Caco-2 (cell line): ENCODE measurements at regions of chr1 and their contacts with region 1.

Region 1: DNA sequence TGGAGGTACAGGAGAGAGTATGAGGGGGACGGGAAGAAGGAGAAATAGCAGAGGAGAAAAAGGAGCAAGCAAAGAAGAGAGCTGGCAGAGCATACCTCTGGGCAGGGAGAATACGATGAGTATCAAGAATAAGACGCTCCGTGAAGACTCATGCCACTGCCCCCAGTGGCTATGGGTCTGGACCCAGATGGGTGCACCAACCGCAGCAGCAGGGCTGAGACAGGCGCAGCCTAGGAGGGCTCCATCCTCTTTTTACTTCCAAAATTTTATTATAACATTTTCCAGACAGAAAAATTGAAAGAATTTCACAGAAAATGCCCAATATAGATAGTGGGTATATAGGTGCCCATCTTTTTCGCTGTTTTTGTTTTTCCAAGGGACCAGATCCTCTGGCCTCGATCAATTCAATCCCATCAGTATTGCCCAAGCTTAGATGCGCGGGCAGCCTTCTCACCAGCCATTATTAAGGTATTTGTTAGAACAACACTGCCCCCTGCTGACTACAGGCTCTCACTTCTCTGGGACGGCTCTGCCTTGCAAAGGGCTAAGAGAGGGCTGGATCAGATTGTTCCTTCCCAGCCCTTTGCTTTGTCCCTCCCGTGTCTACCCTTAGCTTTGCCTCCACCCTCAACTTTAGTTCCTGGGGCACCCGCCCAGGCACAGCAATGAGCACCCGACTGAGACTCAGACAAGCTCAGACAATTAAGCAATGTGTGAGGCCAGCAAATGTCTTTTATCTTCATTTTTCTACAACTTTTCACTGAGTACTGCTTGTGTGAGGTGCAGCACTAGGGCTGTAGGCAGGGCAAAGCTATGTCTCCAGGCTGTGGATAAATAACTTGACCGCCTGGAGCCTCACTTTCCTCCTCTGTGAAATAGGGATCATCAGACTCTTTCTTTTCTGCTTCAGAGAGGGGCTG is 17.5 kb upstream of the CAMK1G start:
- DNase-seq: peak; percentile 83 to 86
- H3K4me3 ChIP-seq: no peak overlapping the region
- H3K4me3 Mint-ChIP-seq: no peak overlapping the region
- H3K27ac Mint-ChIP-seq: no peak overlapping the region
- H3K4me1 ChIP-seq: no peaks in the 10 kb centered on the region
- H3K4me1 Mint-ChIP-seq: no peaks in the 10 kb centered on the region
- H3K27me3 ChIP-seq: no peaks in the 10 kb centered on the region
- H3K27me3 Mint-ChIP-seq: peaks cover 9% of the 10 kb centered on the region
- CTCF ChIP-seq: peak; percentile 70 to 79

Region 2: DNA sequence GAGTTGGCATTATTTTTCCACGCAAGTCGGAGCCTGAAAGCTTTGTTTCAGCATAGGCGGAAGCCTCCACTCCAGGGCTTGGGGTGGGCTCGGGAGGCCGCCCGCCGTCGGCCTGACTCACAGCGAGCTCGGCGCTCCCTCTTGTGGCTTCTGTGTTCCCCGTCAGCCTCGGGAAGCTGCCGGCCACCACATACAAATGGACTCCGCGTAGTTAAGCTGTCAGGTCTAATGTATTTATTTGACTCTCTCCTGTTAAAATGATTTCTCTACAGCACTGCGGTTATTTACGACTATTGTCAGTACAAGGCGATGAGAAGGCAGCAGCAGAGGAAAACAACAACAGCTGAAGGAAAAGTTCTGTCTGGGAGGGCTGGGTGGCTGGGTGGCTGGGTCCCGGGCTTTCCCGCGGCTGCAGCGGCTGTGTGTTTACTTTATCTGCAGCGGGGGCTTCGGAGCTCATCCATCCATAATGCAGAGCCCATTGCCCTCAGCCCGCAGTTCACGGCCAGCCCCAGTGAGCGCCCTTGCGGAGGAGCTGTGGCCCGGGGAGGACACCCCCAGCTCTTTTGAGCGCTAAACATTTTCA is 358.2 kb before region 1 on chr1:
- CTCF ChIA-PET with region 1: interaction called, 6 read pairs
- POLR2A ChIA-PET with region 1: no interaction called
- intact Hi-C with region 1: loop called (anchors 2 kb)
- DNase-seq: peak; percentile 59 to 66
- H3K4me3 ChIP-seq: peak overlapping the region; percentile 10; the same call in 1 of the 2 replicates
- H3K4me3 Mint-ChIP-seq: peak overlapping the region; percentile 62
- H3K27ac Mint-ChIP-seq: no peak overlapping the region
- H3K4me1 ChIP-seq: no peaks in the 10 kb centered on the region
- H3K4me1 Mint-ChIP-seq: no peaks in the 10 kb centered on the region
- H3K27me3 ChIP-seq: peaks cover 1% of the 10 kb centered on the region
- H3K27me3 Mint-ChIP-seq: peaks cover 14% of the 10 kb centered on the region
- CTCF ChIP-seq: peak; percentile 55 to 91

Region 3: DNA sequence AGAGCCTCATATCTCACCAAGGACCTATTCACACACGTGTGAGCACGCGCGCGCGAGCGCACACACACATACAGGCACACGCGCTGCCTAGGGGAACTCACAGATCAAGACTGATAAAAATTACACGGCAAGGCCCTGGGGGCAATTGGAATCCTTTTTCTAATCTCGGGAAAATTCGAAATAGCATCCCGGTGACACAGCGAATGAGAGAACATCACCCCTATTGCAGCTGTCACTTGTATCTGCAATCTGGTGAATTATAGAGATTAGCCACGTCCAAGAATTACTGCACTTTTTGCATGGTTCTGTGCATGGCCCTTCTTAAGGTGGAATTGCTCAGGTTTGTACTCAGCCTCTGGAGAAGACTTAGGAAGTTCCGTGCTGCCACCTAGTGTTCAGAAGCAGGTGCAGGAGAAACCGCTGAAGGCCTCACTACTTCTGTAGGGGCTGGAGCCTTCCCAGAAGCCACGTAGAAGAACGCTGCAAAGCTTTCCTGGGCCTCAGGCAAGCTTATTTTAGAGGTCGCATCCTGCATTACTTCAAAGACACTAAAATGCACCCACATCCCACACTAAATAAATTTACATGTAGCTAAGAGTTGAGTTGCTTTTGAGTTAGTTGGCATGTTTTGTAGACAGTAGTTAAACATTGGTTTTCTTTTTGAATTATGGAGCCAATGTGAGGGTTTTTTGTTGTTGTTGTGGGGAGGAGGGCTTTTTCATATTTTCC is 211.7 kb before region 1 on chr1:
- CTCF ChIA-PET with region 1: interaction called, 3 read pairs
- POLR2A ChIA-PET with region 1: no interaction called
- intact Hi-C with region 1: loop called (anchors 1 kb)
- DNase-seq: peak; percentile 80 to 84
- H3K4me3 ChIP-seq: no peak overlapping the region
- H3K4me3 Mint-ChIP-seq: no peak overlapping the region
- H3K27ac Mint-ChIP-seq: no peak overlapping the region
- H3K4me1 ChIP-seq: peaks cover 38% of the 10 kb centered on the region
- H3K4me1 Mint-ChIP-seq: peaks cover 23% of the 10 kb centered on the region
- H3K27me3 ChIP-seq: no peaks in the 10 kb centered on the region
- H3K27me3 Mint-ChIP-seq: no peaks in the 10 kb centered on the region
- CTCF ChIP-seq: peak; percentile 82 to 90

Region 4: GRCh38 chr1:209490013-209490412 is 76.0 kb before region 1 on chr1:
- CTCF ChIA-PET with region 1: interaction called, 5 read pairs
- POLR2A ChIA-PET with region 1: no interaction called
- intact Hi-C with region 1: loop called (anchors 1 kb)
- DNase-seq: no peak
- H3K4me3 ChIP-seq: no peak overlapping the region
- H3K4me3 Mint-ChIP-seq: no peak overlapping the region
- H3K27ac Mint-ChIP-seq: no peak overlapping the region
- H3K4me1 ChIP-seq: no peaks in the 10 kb centered on the region
- H3K4me1 Mint-ChIP-seq: no peaks in the 10 kb centered on the region
- H3K27me3 ChIP-seq: no peaks in the 10 kb centered on the region
- H3K27me3 Mint-ChIP-seq: peaks cover 6% of the 10 kb centered on the region
- CTCF ChIP-seq: peak; percentile 46 to 60

Region 5: GRCh38 chr1:209527993-209528392 is 38.0 kb before region 1 on chr1:
- CTCF ChIA-PET with region 1: interaction called, 7 read pairs
- POLR2A ChIA-PET with region 1: no interaction called
- intact Hi-C with region 1: loop called (anchors 5 kb)
- DNase-seq: peak; percentile 77 to 90
- H3K4me3 ChIP-seq: no peak overlapping the region
- H3K4me3 Mint-ChIP-seq: peak overlapping the region; percentile 26
- H3K27ac Mint-ChIP-seq: peak overlapping the region; percentile 25
- H3K4me1 ChIP-seq: peaks cover 24% of the 10 kb centered on the region
- H3K4me1 Mint-ChIP-seq: peaks cover 18% of the 10 kb centered on the region
- H3K27me3 ChIP-seq: no peaks in the 10 kb centered on the region
- H3K27me3 Mint-ChIP-seq: no peaks in the 10 kb centered on the region
- CTCF ChIP-seq: no peak

Region 6: GRCh38 chr1:209747580-209748262 is 181.7 kb after region 1 on chr1:
- CTCF ChIA-PET with region 1: interaction called, 9 read pairs
- POLR2A ChIA-PET with region 1: no interaction called
- intact Hi-C with region 1: loop called (anchors 2 kb)
- DNase-seq: peak; percentile 93 to 96
- H3K4me3 ChIP-seq: no peak overlapping the region
- H3K4me3 Mint-ChIP-seq: peak overlapping the region; percentile 51
- H3K27ac Mint-ChIP-seq: peak overlapping the region; percentile 53
- H3K4me1 ChIP-seq: peaks cover 19% of the 10 kb centered on the region
- H3K4me1 Mint-ChIP-seq: peaks cover 16% of the 10 kb centered on the region
- H3K27me3 ChIP-seq: no peaks in the 10 kb centered on the region
- H3K27me3 Mint-ChIP-seq: no peaks in the 10 kb centered on the region
- CTCF ChIP-seq: peak; percentile 62 to 83